Activated CD4-positive, alpha-beta memory T cell treated with anti-CD3 and anti-CD28 coated beads, Interleukin-2, amount 10 ng/mL, durations not matched to agents 7 days and 5 days (primary cell): ENCODE measurements at regions of chr12 and their contacts with region 1.

Region 1: DNA sequence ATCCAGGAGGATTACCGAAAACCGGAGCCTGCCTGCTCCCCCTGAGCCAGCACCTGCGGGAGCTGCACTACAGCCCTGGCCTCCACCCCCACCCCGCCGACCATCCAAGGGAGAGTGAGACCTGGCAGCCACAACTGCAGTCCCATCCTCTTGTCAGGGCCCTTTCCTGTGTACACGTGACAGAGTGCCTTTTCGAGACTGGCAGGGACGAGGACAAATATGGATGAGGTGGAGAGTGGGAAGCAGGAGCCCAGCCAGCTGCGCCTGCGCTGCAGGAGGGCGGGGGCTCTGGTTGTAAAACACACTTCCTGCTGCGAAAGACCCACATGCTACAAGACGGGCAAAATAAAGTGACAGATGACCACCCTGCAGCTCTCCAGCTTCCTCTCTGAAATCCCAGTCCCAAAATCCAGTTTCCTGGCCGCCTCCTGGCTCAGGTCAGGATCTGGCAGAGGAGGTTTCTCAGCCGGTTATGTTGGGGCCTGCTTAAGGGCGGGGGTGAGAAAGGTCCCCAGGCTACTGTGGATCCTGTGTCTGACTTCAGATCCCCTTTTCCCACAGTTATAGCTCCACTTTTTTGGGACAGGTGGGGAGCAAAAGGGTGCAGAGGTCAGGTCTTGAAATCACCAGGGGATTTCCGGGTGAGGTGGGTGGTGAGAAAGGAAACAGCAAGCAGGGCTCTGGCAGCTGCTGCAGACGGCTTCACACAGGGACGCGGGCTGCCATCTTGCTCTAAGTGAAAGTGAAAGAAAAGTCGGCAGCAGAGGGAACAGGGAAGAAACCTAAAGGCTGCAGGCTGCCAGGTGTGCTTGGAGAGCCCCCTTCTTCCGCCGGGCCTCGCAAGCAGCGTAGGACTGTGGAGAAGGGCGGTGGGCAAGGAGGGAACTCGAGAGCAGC is at the start of gene TAPBPL:
- DNase-seq: peak; percentile 83
- H3K4me3 Mint-ChIP-seq: peak within 1 kb of the TSS; percentile 99
- H3K27ac Mint-ChIP-seq: peak within 1 kb of the TSS; percentile 97
- H3K4me1 Mint-ChIP-seq: peaks cover 71% of the 10 kb centered on the region
- H3K27me3 Mint-ChIP-seq: no peaks in the 10 kb centered on the region
- total RNA-seq, gene TAPBPL: 45.0 to 49.0 TPM

Region 2: GRCh38 chr12:6434205-6435140 is 17.1 kb before region 1 on chr12:
- CTCF ChIA-PET with region 1: interaction called, 3 read pairs
- POLR2A ChIA-PET with region 1: interaction called, 22 read pairs
- DNase-seq: peak; percentile 50
- H3K4me3 Mint-ChIP-seq: no peak overlapping the region
- H3K27ac Mint-ChIP-seq: peak overlapping the region; percentile 71
- H3K4me1 Mint-ChIP-seq: peaks cover 44% of the 10 kb centered on the region
- H3K27me3 Mint-ChIP-seq: no peaks in the 10 kb centered on the region

Region 3: GRCh38 chr12:6493497-6494257 is 42.1 kb after region 1 on chr12 and contains the start of gene NCAPD2:
- CTCF ChIA-PET with region 1: interaction called, 4 read pairs
- POLR2A ChIA-PET with region 1: interaction called, 29 read pairs
- DNase-seq: peak; percentile 98
- H3K4me3 Mint-ChIP-seq: peak within 1 kb of the TSS; percentile 96
- H3K27ac Mint-ChIP-seq: peak within 1 kb of the TSS; percentile 98
- H3K4me1 Mint-ChIP-seq: peaks cover 44% of the 10 kb centered on the region
- H3K27me3 Mint-ChIP-seq: no peaks in the 10 kb centered on the region
- total RNA-seq, gene NCAPD2: 153 to 156 TPM